Stomach (tissue), 19 donors: ENCODE measurements at regions of chr22 and their contacts with region 1.

Region 1: GRCh38 chr22:21712894-21713712 is 22.5 kb downstream of the YPEL1 start:
- DNase-seq: peak; percentile 69 to 91
- H3K4me3 ChIP-seq: peak overlapping the region in 2 of 4 donors; percentile 11 to 19
- H3K27ac ChIP-seq: no peak overlapping the region
- H3K4me1 ChIP-seq: peaks cover 0 to 23% (median 15%) of the 10 kb centered on the region in 4 donors
- H3K27me3 ChIP-seq: no peaks in the 10 kb centered on the region
- CTCF ChIP-seq: peak in 5 of 7 experiments; percentile 53 to 93 (median 74)
- EP300 ChIP-seq: no peak
- POLR2A ChIP-seq: no peak

Region 2: DNA sequence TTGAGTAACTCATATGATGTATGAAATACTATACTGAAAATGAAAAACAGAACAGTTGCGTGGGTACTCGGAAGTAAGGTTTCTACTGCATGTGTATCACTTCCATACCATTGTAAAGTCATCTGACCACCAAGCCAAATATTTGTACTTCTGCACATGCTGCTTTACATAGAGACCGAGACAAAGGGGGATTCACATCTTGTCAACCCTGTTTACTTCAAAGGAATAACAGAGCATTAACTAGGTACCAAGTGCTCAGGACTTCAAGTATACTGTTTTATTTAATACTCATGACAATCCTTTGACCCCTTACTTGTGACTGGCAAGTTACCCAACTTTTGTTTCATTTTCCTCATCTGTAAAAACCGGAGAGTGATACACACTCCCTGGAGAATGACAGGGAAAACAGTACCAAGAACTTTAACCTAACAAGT is 144.4 kb after region 1 on chr22:
- intact Hi-C with region 1: no loop called
- DNase-seq: peak in 1 of 2 donors; percentile 35
- H3K4me3 ChIP-seq: peak overlapping the region in 1 of 4 donors; percentile 3
- H3K27ac ChIP-seq: peak overlapping the region in 3 of 5 donors; percentile 61 to 66 (median 63)
- H3K4me1 ChIP-seq: peaks cover 46 to 99% (median 77%) of the 10 kb centered on the region in 4 donors
- H3K27me3 ChIP-seq: no peaks in the 10 kb centered on the region
- CTCF ChIP-seq: no peak
- EP300 ChIP-seq: no peak
- POLR2A ChIP-seq: no peak

Region 3: DNA sequence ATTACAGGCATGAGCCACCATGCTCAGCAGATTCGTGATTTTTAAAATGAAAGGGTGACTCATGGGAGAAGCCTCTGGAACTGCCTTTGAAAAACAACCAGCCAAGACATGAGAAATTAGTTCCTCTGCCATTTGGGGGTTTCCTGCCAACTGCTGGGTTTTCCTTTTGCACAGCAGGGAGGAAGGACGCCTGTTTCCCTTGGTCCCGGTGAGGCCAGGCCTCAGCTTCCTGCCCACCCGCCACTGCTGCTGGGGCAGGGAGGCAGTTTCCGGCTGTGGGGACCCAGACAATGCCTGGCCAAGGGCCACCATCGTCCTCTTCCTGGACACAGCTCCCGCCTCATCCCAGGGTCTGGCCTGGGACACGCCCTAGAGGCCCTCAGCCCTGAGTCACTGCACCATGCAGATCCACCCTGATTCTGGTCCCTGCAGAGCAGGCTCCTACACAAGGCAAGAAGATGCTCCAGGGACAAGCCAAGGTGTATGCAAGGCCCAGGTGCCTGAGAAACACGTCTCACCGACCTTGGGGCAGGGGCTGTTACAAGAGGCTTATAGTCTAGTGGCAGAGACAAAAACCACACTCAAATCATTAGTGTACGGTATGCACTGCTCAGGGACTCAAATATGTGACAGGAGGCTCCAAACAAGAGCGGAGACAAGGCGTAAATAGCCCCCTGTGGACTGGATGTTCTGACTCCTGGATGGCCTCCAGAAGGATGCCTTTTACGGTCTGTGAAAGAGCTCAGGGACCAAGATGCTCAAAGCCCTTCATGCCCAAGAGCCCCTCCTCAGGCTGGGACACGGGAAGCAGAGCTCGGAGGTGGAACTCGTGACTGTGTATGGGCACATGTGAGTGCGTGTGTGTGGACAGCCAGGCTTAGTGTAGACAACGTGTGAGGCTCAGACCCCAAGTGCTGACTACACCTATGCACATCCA is 229.6 kb after region 1 on chr22:
- intact Hi-C with region 1: loop called (anchors 5 kb)
- DNase-seq: peak; percentile 38 to 76
- H3K4me3 ChIP-seq: no peak overlapping the region
- H3K27ac ChIP-seq: peak overlapping the region; percentile 67 to 97 (median 95)
- H3K4me1 ChIP-seq: peaks cover 42 to 89% (median 69%) of the 10 kb centered on the region in 4 donors
- H3K27me3 ChIP-seq: no peaks in the 10 kb centered on the region
- CTCF ChIP-seq: no peak
- EP300 ChIP-seq: no peak
- POLR2A ChIP-seq: no peak